Activated CD4-positive, alpha-beta memory T cell treated with anti-CD3 and anti-CD28 coated beads for 36 hours (primary cell): ENCODE measurements at regions of chr7 and their contacts with region 1.

Region 1: DNA sequence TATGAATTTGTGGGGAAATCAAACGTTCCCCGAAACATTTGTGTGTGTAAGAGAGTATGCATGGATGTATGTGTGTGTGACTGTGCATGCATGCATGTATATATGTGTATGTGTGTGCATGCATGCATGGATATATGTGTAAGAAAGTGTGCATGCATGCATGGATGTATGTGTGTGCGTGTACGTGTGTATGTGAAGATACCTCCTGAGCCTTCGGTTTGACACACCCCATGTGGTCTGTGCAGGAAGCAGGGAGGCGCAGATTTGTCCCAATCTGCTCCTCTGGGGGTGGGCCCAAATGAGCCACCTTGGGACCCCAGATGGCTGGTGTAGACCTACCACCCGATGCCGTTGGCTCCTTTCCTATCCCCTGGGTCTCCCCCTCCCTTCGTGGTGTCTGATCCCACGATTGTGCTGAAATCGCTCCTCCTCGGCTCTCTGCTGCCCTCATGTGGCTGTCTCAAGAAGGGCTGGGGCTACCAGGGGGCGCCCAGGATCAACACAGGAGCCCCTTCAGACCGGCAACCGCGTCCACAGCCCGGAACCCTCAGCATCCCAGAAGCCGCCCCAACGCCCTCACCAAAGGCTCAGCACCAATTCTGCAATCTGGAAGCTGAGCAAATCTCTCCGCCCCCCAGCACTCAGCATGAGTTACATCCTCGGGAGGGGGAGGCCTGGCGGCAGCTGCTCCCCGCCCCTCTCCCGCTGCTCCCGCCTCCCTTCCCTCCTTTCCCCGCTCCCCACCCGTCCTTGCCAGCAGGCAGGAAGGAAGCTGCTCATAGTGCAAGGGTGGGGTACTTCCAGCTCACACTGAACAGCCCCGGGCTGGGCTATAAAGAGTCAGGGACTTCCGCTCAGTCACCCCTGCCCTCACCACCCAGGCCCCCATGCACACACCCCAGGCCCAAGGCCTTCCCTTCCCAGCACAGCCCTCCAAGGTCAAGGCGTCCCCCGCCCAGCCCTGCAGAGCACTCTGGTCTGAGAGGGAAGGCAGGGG is 2.3 kb upstream of the NOS3 start:
- DNase-seq: peak; percentile 79
- H3K4me3 Mint-ChIP-seq: no peak overlapping the region
- H3K27ac Mint-ChIP-seq: no peak overlapping the region
- H3K4me1 Mint-ChIP-seq: peaks cover 22% of the 10 kb centered on the region
- H3K27me3 Mint-ChIP-seq: no peaks in the 10 kb centered on the region

Region 2: DNA sequence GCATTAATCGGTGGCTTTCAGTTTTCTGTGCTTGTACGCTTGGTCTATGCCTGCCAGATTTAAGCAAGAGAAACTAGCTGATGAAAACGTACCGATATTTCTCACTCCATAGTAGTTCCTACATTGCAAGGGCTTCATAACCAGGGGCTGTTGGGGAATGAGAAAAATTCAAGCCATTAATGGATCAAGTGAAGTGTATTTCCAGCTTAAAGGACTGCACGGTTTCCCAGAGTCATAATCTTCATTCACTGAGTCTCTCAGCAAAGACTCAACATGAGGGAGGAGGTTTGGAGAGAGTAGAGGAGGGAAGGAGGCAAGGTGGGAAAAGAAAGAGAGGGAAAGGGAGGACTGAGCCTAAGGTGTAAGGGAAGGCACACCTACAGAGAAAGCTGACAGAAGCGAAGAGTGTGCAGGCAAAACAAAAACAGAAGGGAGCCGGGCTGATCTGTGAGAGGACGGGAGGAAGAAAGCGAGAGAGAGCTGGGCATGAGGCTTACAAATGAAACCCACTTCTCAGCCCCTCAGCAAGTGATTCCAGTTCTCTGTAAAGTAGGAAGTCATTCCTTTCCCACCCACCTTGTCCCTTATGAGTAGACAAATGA is 302.4 kb before region 1 on chr7:
- CTCF ChIA-PET with region 1: no interaction called
- POLR2A ChIA-PET with region 1: no interaction called
- intact Hi-C with region 1: no loop called
- DNase-seq: peak; percentile 49
- H3K4me3 Mint-ChIP-seq: peak overlapping the region; percentile 98
- H3K27ac Mint-ChIP-seq: peak overlapping the region; percentile 99
- H3K4me1 Mint-ChIP-seq: peaks cover 70% of the 10 kb centered on the region
- H3K27me3 Mint-ChIP-seq: no peaks in the 10 kb centered on the region

Region 3: GRCh38 chr7:150778738-150779301 is 209.7 kb before region 1 on chr7:
- CTCF ChIA-PET with region 1: interaction called, 3 read pairs
- POLR2A ChIA-PET with region 1: no interaction called
- intact Hi-C with region 1: loop called (anchors 1 kb)
- DNase-seq: peak; percentile 81
- H3K4me3 Mint-ChIP-seq: no peak overlapping the region
- H3K27ac Mint-ChIP-seq: no peak overlapping the region
- H3K4me1 Mint-ChIP-seq: peaks cover 4% of the 10 kb centered on the region
- H3K27me3 Mint-ChIP-seq: peaks cover 1% of the 10 kb centered on the region

Region 4: GRCh38 chr7:150898475-150899011 is 90.0 kb before region 1 on chr7:
- CTCF ChIA-PET with region 1: interaction called, 53 read pairs
- POLR2A ChIA-PET with region 1: no interaction called
- intact Hi-C with region 1: loop called (anchors 1 kb)
- DNase-seq: peak; percentile 85
- H3K4me3 Mint-ChIP-seq: peak overlapping the region; percentile 25
- H3K27ac Mint-ChIP-seq: no peak overlapping the region
- H3K4me1 Mint-ChIP-seq: peaks cover 11% of the 10 kb centered on the region
- H3K27me3 Mint-ChIP-seq: peaks cover 42% of the 10 kb centered on the region

Region 5: DNA sequence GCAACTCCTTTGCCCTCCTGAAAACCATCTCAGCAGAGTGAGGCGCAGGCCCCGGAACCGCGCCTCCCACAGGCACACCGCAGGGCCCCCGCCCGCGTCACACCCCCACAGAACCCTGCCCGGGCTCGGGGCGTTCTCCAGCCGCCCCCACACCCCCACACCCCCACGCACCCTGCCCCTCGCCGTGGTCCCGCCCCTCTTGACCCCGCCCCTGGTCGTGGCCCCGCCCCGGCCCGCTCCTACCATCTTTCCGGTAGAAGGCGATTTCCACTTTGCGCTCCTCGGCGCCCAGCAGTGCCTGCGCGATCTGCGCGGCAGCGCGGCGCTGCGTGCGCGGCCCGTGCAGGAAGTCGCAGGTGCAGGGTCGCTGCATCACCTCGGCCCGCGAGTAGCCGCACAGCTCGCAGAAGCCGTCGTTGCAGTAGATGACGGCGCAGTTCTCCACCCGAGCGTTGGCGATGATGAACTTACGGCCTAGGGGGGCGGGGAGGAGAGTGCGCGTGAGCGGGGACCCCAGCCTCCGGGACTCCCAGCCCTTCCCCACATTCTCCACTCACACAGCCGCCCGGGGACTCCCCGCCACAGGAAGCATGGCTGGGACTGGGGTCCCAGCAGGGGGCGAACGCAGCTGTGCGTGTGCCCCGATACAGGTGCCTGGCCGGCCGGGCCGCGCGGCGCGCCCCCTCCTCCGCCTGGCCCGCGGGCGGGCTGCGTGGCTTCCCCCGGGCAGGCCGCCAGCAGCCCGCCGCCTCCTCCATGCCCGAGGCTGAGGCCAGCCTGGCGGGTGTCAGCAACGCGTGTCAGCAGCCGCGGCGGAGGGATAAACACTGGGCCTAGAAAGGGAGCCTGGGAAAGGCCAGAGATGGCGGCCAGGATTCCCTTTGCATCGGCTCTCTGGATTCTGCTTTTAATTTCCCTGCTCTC is 13.8 kb before region 1 on chr7:
- CTCF ChIA-PET with region 1: interaction called, 108 read pairs
- POLR2A ChIA-PET with region 1: no interaction called
- intact Hi-C with region 1: no loop called
- DNase-seq: peak; percentile 83
- H3K4me3 Mint-ChIP-seq: peak overlapping the region; percentile 83
- H3K27ac Mint-ChIP-seq: peak overlapping the region; percentile 77
- H3K4me1 Mint-ChIP-seq: peaks cover 23% of the 10 kb centered on the region
- H3K27me3 Mint-ChIP-seq: peaks cover 21% of the 10 kb centered on the region

Region 6: DNA sequence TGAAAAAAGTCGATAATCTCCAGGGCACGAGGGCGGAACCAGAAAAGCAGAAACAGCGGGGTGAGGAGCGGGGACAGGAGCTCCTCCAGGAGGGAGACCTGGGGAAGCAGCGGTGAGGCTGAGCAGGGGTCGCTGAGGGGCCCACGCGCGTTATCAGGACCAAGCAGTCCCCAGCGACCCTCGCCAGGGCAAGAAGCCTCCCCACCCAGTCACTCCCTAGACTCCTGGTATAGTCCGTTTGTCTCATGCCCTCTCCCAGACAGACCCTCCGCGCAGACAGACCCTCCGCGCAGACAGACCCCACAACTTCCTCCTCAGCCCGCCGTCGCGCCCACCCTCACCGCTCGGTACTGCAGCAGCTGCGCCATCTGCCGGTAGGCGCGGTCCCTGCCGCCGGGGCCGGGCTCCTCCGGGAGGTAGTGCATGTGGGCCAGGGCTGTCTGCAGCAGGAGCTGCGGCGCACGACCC is 29.5 kb after region 1 on chr7:
- CTCF ChIA-PET with region 1: interaction called, 16 read pairs
- POLR2A ChIA-PET with region 1: no interaction called
- intact Hi-C with region 1: no loop called
- DNase-seq: peak; percentile 86
- H3K4me3 Mint-ChIP-seq: peak overlapping the region; percentile 63
- H3K27ac Mint-ChIP-seq: no peak overlapping the region
- H3K4me1 Mint-ChIP-seq: peaks cover 47% of the 10 kb centered on the region
- H3K27me3 Mint-ChIP-seq: peaks cover 11% of the 10 kb centered on the region

Region 7: DNA sequence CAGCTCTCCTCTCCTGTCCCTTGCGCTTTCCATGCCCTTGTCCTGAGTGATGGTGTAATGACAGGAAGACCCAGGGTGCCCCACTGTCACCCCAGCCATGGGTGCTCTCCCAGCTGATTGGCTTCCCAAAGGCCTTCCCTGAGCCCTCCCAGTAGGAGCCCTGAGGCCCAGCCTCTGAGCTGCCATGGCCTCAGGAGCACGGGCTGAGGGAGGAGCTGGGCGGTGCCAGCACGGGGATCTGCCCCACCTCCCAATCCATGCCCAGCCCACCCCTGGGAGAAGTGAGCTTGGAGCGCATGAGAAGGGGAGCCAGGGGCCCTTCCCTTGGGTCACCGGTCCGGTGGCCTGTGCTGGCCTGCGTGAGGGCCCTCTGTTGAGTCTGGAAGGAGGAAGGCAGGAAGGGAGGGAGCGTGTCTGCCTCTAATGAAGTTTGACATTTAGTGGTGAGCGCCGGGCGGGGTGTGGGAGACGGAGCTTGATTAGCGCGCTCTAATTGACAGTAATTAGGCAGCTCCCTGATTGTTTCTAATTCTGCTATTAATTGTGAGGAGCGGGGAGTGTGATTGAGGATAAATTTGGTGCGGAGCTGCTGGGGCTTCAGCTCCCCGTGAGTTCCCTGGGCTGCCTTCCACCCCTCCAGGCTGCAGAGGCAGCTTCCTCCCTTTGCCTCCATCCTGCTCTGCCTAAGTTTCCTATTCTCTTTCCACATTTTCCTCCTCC is 150.7 kb after region 1 on chr7:
- CTCF ChIA-PET with region 1: no interaction called
- POLR2A ChIA-PET with region 1: no interaction called
- intact Hi-C with region 1: no loop called
- DNase-seq: no peak
- H3K4me3 Mint-ChIP-seq: no peak overlapping the region
- H3K27ac Mint-ChIP-seq: no peak overlapping the region
- H3K4me1 Mint-ChIP-seq: no peaks in the 10 kb centered on the region
- H3K27me3 Mint-ChIP-seq: no peaks in the 10 kb centered on the region